H1 (cell line): ENCODE measurements at regions of chr3 and their contacts with region 1.

Region 1: GRCh38 chr3:149657926-149658733 is at the start of gene WWTR1:
- DNase-seq: peak; percentile 88 to 90
- H3K4me3 ChIP-seq: peak within 1 kb of the TSS; percentile 53 to 83 (median 73)
- H3K27ac ChIP-seq: peak within 1 kb of the TSS; percentile 98
- H3K4me1 ChIP-seq: peaks cover 0 to 7% (median 2%) of the 10 kb centered on the region in 4 experiments
- H3K27me3 ChIP-seq: peaks cover 0 to 12% (median 8%) of the 10 kb centered on the region in 4 experiments; a peak in 4 of 7 replicates
- CTCF ChIP-seq: no peak
- EP300 ChIP-seq: peak in 1 of 2 experiments; percentile 7; a peak in 1 of 3 replicates
- POLR2A ChIP-seq: peak; percentile 86 to 93
- RAD21 ChIP-seq: peak in 1 of 2 experiments; percentile 29; a peak in 1 of 4 replicates
- total RNA-seq, gene WWTR1: 18.6 and 19.2 TPM in 2 replicates

Region 2: DNA sequence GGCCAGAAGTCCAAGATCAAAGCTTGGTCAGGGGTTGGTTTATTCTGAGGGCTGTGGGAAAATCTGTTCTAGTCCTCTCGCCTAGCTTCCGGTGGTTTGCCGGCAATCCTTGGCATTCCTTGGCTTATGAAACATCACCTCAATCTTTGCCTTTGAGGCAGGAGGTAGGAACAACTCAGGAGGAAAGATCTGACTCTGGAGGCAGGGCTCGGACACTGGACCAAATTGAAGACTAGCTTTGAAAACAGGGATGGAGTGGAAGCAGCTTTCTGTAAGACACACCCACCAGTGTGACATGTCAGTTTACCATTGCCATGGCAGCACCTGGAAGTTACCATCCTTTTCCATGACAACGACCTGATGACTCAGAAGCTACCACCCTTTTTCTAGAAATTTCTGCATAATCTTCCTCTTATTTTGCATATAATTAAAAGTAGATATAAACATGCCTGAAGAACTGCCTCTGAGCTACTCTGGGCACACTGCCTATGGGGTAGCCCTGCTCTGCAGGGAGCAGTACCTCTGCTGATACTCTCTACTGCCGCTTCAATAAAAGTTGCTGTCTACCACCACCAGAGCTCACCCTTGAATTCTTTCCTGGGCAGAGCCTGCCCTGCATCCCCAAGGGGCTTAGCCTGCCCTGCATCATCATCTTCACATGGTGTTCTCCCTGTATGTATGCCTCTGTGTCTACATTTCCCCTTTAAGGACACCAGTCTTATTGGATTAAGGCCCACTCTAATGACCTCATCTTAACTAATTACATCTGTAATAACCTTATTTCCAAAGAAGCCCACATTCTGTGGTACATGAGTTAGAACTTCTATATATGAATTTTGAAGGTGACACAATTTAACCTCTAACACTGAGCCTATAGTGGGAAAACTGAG is 221.9 kb before region 1 on chr3:
- CTCF ChIA-PET with region 1: no interaction called
- POLR2A ChIA-PET with region 1: no interaction called
- DNase-seq: no peak
- H3K4me3 ChIP-seq: no peak overlapping the region
- H3K27ac ChIP-seq: no peak overlapping the region
- H3K4me1 ChIP-seq: no peaks in the 10 kb centered on the region
- H3K27me3 ChIP-seq: no peaks in the 10 kb centered on the region
- CTCF ChIP-seq: no peak
- EP300 ChIP-seq: no peak
- POLR2A ChIP-seq: no peak
- RAD21 ChIP-seq: no peak

Region 3: GRCh38 chr3:149566292-149566975 is 91.7 kb before region 1 on chr3:
- CTCF ChIA-PET with region 1: interaction called, 35 read pairs
- POLR2A ChIA-PET with region 1: interaction called, 19 read pairs
- DNase-seq: no peak
- H3K4me3 ChIP-seq: no peak overlapping the region
- H3K27ac ChIP-seq: no peak overlapping the region
- H3K4me1 ChIP-seq: peaks cover 0 to 6% (median 3%) of the 10 kb centered on the region in 4 experiments; a peak in 4 of 7 replicates
- H3K27me3 ChIP-seq: no peaks in the 10 kb centered on the region
- CTCF ChIP-seq: no peak
- EP300 ChIP-seq: no peak
- POLR2A ChIP-seq: no peak
- RAD21 ChIP-seq: no peak

Region 4: DNA sequence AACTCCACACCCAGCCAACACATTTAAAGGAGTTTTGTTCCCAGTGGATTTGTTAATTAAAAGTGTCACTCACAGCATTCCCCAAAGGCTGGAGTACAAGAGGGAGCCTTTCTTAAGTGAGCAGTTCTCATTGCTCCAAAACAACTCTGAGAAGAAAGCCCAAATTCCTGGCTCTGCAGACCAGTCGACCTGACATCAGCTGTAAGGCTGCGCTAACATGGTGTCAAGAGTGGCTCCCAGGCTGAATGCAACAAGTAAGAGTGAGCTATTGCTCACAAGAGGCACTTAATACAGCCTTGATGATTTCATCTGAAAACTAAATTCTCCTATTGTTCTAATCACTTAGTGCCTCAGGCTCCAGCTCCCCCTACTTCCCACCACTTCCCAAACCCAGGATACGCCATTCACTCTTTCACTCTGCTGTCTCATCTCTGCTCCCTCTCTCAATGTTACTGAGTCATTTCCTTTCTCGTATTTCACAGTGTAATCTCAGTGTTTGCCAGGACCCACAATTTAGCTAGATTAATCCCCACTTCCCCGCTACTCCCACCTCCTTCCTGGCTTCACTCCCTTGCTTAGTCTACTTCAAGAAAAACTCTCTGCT is 82.1 kb before region 1 on chr3:
- CTCF ChIA-PET with region 1: interaction called, 35 read pairs
- POLR2A ChIA-PET with region 1: interaction called, 33 read pairs
- DNase-seq: no peak
- H3K4me3 ChIP-seq: no peak overlapping the region; a peak in 1 of 8 replicates
- H3K27ac ChIP-seq: no peak overlapping the region
- H3K4me1 ChIP-seq: peaks cover 0 to 15% (median 14%) of the 10 kb centered on the region in 4 experiments; a peak in 5 of 7 replicates
- H3K27me3 ChIP-seq: no peaks in the 10 kb centered on the region
- CTCF ChIP-seq: no peak
- EP300 ChIP-seq: no peak
- POLR2A ChIP-seq: no peak
- RAD21 ChIP-seq: no peak

Region 5: GRCh38 chr3:149638228-149639092 is 19.7 kb before region 1 on chr3:
- CTCF ChIA-PET with region 1: interaction called, 3 read pairs
- POLR2A ChIA-PET with region 1: interaction called, 26 read pairs
- DNase-seq: no peak
- H3K4me3 ChIP-seq: no peak overlapping the region
- H3K27ac ChIP-seq: no peak overlapping the region
- H3K4me1 ChIP-seq: peaks cover 0 to 6% (median 0%) of the 10 kb centered on the region in 4 experiments; a peak in 3 of 7 replicates
- H3K27me3 ChIP-seq: no peaks in the 10 kb centered on the region
- CTCF ChIP-seq: no peak
- EP300 ChIP-seq: no peak
- POLR2A ChIP-seq: no peak
- RAD21 ChIP-seq: no peak

Region 6: DNA sequence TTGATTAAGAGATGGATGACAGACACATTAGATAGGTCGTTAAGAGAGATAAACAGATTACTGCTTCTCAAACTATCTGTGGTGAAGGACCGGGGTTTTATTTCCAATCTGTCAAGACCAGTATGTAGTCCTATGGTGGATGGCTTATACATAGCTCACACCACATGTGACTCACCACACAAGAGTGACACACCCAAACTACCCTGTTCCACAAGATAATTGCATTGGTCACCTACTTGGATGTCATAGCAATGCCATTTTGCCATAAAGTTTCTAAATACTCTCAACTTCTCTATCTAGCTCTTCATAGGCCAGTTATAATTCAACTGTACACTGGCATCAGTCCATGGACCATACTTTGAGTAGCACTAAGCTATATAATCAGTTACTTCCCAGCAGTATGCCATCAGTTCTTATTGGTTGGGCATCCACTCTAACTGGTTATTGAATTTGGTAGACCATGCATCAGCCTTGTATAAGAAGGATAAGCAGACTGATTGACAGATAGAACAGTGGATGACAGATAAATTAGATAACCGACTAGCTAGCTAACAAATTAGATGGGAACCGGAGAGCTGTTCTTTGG is 11.9 kb before region 1 on chr3:
- CTCF ChIA-PET with region 1: interaction called, 5 read pairs
- POLR2A ChIA-PET with region 1: interaction called, 53 read pairs
- DNase-seq: no peak
- H3K4me3 ChIP-seq: no peak overlapping the region
- H3K27ac ChIP-seq: no peak overlapping the region
- H3K4me1 ChIP-seq: peaks cover 0 to 7% (median 0%) of the 10 kb centered on the region in 4 experiments; a peak in 1 of 7 replicates
- H3K27me3 ChIP-seq: no peaks in the 10 kb centered on the region
- CTCF ChIP-seq: no peak
- EP300 ChIP-seq: no peak
- POLR2A ChIP-seq: no peak
- RAD21 ChIP-seq: no peak

Region 7: DNA sequence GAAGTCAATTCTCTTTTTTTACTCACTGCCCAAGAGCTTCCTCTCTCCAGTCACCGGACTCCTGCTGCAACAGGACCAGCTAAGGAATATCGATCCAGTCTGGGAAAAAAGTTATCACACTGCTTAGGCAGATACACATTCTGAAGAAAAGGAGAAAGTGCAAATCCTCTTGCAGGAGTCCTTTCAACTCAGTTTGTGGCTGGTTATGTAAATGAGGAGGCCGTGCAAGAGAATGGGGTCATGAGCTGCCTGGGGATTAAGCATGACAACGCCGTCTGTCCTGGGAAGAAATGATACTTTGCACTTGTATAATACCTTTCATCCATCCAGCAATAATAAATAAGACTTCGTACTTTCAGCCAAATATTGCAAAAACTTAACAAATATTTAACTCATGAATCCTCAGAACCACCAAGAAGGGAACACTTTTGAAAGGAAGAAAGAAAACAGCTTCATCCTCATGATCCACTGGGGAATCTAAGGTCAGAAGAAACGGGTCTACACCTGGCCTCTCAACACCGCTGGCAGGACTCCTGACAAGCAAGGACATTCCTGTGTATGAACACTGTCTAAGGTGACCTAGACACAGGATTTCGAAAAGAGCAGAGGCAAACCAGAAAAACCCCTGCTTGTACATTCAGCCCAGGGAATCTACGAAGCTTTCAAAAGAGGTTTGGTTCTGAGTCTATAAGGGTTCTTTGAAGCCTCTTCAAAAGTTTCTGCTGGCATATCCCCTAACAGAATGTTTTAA is 12.8 kb after region 1 on chr3:
- CTCF ChIA-PET with region 1: interaction called, 3 read pairs
- POLR2A ChIA-PET with region 1: interaction called, 42 read pairs
- DNase-seq: no peak
- H3K4me3 ChIP-seq: peak overlapping the region in 2 of 4 experiments; percentile 17 to 37; a peak in 4 of 8 replicates
- H3K27ac ChIP-seq: no peak overlapping the region
- H3K4me1 ChIP-seq: peaks cover 3 to 11% (median 6%) of the 10 kb centered on the region in 4 experiments; a peak in 6 of 7 replicates
- H3K27me3 ChIP-seq: peaks cover 0 to 20% (median 5%) of the 10 kb centered on the region in 4 experiments; a peak in 5 of 7 replicates
- CTCF ChIP-seq: no peak
- EP300 ChIP-seq: no peak; a peak in 1 of 3 replicates
- POLR2A ChIP-seq: no peak
- RAD21 ChIP-seq: no peak

Region 8: DNA sequence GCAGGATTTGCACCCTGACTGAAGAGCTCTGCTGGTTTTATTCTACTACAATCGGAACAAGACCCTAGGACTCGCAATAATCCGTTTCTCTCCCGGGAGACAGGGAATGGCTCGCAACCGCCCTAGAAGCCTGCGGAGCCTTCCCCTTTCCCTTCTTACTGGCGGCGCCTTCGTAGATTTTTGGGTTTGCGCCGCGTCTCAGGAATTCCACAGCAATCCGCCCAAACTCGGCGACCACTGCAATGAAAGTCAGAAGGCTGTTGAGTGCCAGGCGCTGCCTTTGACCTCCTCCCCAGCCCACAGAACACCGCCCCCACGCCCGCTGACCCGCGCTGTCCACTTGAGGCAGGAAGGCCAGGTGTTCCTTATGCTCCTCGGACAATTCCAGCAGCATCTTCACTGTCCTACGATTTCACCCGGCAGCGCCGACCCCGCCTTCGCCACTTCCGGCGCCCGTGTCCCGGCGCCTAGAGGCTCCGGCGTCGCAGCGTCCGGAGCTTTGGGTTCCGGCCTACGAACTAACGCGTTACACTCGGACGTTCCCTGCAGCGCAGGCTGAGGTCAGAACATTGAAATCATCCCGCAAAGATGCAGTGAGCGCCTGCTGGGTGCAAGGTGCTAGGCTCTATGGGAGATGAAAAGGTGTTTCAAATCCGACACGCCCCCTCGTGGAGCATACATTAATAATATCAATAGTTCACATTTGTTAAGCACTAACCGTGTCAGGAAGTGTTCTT is 94.1 kb after region 1 on chr3 and contains the start of gene COMMD2:
- CTCF ChIA-PET with region 1: no interaction called
- POLR2A ChIA-PET with region 1: interaction called, 16 read pairs
- DNase-seq: peak; percentile 69 to 81
- H3K4me3 ChIP-seq: peak within 1 kb of the TSS; percentile 84 to 96 (median 94)
- H3K27ac ChIP-seq: peak within 1 kb of the TSS; percentile 80; the same call in 1 of the 2 replicates
- H3K4me1 ChIP-seq: no peaks in the 10 kb centered on the region; a peak in 2 of 7 replicates
- H3K27me3 ChIP-seq: no peaks in the 10 kb centered on the region
- CTCF ChIP-seq: peak in 2 of 3 experiments; percentile 6 to 13; a peak in 2 of 4 replicates
- EP300 ChIP-seq: peak in 1 of 2 experiments; percentile 89; a peak in 1 of 3 replicates
- POLR2A ChIP-seq: peak; percentile 85 to 94
- RAD21 ChIP-seq: peak; percentile 4 to 16; a peak in 1 of 4 replicates
- total RNA-seq, gene COMMD2: 51.6 and 57.2 TPM in 2 replicates

Region 9: GRCh38 chr3:149860881-149861280 is 202.8 kb after region 1 on chr3:
- CTCF ChIA-PET with region 1: no interaction called
- POLR2A ChIA-PET with region 1: no interaction called
- DNase-seq: no peak
- H3K4me3 ChIP-seq: no peak overlapping the region
- H3K27ac ChIP-seq: no peak overlapping the region
- H3K4me1 ChIP-seq: peaks cover 0 to 2% (median 0%) of the 10 kb centered on the region in 4 experiments; a peak in 1 of 7 replicates
- H3K27me3 ChIP-seq: no peaks in the 10 kb centered on the region
- CTCF ChIP-seq: no peak
- EP300 ChIP-seq: no peak
- POLR2A ChIP-seq: no peak
- RAD21 ChIP-seq: no peak